ENCODE measurements at regions of chr2 and their contacts with region 1.

Region 1: GRCh38 chr2:9378433-9379390 is 44.6 kb downstream of the ITGB1BP1 start:
- DNase-seq: no peak
- H3K4me3 ChIP-seq: peak overlapping the region in 1 of 3 donors; percentile 11
- H3K27ac ChIP-seq: peak overlapping the region; percentile 33 to 85
- H3K4me1 ChIP-seq: no peaks in the 10 kb centered on the region
- H3K27me3 ChIP-seq: no peaks in the 10 kb centered on the region
- CTCF ChIP-seq: no peak
- POLR2A ChIP-seq: no peak

Region 2: DNA sequence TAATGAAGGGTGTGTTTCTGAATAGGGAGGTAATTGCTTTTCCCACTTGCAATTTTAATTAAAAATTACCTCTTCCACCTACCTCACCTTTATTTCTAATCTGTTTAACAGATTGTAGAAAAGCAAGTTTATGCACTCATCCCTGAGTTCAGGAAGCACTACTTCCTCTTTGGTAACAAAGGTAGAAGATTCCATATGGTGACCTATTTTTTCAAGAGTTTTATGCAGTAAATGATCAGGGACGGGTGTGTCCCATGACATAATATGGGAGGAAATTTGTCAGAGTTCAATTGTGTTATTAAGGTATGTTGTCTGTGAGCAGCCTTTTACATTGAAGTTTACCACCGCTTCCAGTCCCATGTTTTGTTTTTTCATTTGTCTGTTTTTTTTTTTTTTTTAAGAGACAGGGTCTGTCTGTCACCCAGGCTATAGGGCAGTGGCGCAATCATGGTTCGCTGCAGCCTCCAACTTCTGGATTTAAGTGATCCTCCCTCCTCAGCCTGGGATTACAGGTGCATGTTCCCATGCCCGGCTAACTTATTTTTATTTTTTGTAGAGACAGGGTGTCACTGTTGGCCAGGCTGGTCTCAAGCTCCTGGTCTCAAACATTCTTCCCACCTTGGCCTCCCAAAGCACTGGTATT is 103.9 kb before region 1 on chr2:
- intact Hi-C with region 1: no loop called
- DNase-seq: no peak
- H3K4me3 ChIP-seq: no peak overlapping the region
- H3K27ac ChIP-seq: no peak overlapping the region
- H3K4me1 ChIP-seq: no peaks in the 10 kb centered on the region
- H3K27me3 ChIP-seq: no peaks in the 10 kb centered on the region
- CTCF ChIP-seq: no peak
- POLR2A ChIP-seq: no peak

Region 3: DNA sequence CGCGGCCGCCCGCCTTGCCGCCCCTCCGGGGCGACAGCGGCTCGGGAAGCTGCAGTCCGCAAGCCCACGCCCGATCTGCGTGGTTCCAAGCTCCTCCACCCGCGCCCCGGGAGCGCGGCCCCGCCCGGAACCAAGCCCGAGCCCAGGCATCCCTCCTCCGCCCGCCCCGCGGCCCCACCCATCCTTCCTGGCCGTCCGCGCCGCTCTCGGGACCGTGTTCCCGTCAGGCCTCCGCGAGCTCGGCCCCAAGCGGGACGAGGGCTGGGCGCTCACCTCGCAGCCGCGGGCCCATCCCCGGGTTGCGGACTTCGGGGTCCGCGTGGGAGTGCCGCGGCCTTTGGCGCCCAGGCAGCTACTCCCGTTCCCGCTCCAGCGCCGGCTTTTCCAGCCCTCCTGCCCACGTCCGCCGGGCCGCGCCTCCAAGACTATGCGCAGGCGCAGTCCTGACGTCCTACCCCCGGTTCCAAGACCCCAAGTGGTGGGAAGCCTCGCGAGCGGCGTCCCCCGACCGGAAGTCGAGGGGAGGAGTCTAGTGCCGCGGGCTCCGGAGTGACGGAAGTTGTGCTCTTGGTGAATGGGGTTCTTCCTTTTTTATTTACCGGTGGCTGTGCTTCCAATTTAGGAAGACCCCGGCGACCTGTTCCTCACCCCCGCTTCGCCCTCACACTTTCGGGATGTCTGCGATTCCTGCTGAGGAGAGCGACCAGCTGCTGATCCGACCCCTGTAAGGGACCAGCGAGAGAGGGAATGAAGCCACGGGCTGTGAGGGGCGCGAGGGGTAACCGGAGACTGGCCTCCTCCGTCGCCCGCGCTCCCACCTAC is 44.6 kb after region 1 on chr2 and contains the starts of genes CPSF3 and ITGB1BP1:
- intact Hi-C with region 1: no loop called
- DNase-seq: peak; percentile 92 to 96
- H3K4me3 ChIP-seq: peak within 1 kb of the TSS; percentile 81 to 97 (median 91)
- H3K27ac ChIP-seq: peak within 1 kb of the TSS; percentile 88 to 93
- H3K4me1 ChIP-seq: peaks cover 0 to 19% of the 10 kb centered on the region in 2 donors
- H3K27me3 ChIP-seq: no peaks in the 10 kb centered on the region
- CTCF ChIP-seq: peak in 2 of 3 donors; percentile 16 to 25
- POLR2A ChIP-seq: peak; percentile 29
- total RNA-seq, gene CPSF3: 18.1 to 26.2 (median 23.1) TPM
- total RNA-seq, gene ITGB1BP1: 35.7 to 271 (median 63.3) TPM

Region 4: DNA sequence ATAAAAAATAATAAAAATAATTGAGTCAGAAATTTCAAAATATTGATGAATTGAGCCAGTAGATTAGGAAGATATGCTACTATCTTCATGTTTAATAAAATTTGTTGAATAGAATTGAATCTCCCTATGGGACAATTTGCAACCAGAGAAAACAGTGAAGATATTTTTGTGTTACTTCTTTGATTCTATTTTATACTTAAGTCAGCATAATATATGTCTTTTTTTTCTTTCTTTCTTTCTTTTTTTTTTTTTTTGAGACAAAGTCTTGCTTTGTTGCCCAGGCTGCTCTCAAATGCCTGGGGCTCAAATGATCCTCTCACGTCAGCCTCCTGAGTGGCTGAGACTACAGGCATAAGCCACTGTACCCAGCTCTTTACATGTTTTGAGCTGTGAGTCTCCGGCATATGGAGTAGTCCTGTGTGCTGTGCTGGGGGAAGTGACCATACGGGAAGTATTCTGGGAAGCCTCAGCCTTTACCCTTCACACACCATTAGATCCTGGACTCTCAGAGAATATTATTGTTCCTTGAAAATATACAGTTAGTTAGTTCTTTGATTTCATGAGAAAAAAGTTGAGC is 81.8 kb after region 1 on chr2:
- intact Hi-C with region 1: loop called (anchors 2 kb)
- DNase-seq: no peak
- H3K4me3 ChIP-seq: no peak overlapping the region
- H3K27ac ChIP-seq: no peak overlapping the region
- H3K4me1 ChIP-seq: no peaks in the 10 kb centered on the region
- H3K27me3 ChIP-seq: no peaks in the 10 kb centered on the region
- CTCF ChIP-seq: no peak
- POLR2A ChIP-seq: no peak

Measured in breast epithelium (tissue), 4 donors.